K562 (cell line): ENCODE measurements at regions of chr18 and their contacts with region 1.

Region 1: DNA sequence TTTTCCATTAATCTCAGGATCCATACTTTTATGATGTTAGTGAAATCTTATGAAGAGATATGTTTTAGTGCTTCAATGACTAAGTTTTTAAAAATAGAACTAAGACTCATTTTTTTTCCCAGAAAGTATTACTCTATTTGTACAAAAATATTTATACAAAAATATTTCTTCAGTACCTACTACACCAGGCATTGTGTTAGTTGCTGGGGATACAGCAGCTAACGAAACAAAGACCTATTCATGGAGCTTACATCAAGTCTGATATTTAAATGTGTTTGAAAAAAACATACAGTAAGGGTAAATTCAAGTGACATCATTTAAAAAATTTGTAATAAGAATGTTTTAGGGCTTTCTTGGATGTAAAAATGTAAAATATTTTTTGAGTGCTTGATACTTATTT is 11.6 kb downstream of the VAPA start:
- DNase-seq: no peak
- ATAC-seq: no peak
- H3K4me3 ChIP-seq: no peak overlapping the region
- H3K27ac ChIP-seq: peak overlapping the region; percentile 69; the same call in 2 of the 3 replicates
- H3K4me1 ChIP-seq: peaks cover 5 to 77% of the 10 kb centered on the region in 2 experiments
- H3K27me3 ChIP-seq: no peaks in the 10 kb centered on the region
- CTCF ChIP-seq: no peak
- EP300 ChIP-seq: no peak
- POLR2A ChIP-seq: no peak
- RAD21 ChIP-seq: no peak

Region 2: DNA sequence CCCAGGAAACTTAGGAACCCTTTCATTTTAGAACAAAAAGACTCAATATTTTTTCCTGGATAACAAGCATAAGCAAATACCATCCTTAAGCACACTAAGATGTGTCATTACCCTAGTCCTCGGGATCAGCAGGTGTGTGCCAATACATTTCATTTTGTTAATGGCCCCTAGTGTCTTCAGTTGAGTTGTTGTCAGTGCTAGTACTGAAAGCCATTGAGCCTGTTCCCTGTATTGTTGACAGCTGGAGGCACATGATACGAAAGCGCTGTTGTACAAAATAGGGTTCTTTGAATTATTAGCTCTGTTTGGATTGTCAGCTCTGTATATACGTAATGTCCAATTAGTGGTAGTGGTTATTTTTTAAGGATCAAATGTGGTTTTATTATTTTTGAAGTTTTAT is 17.9 kb after region 1 on chr18:
- CTCF ChIA-PET with region 1: no interaction called
- POLR2A ChIA-PET with region 1: interaction called, 11 read pairs
- in situ Hi-C with region 1: no loop called
- intact Hi-C with region 1: no loop called
- DNase-seq: no peak
- ATAC-seq: no peak; the same call in 2 of the 3 replicates
- H3K4me3 ChIP-seq: no peak overlapping the region
- H3K27ac ChIP-seq: peak overlapping the region; percentile 30; the same call in 1 of the 3 replicates
- H3K4me1 ChIP-seq: peaks cover 0 to 3% of the 10 kb centered on the region in 2 experiments; a peak in 2 of 5 replicates
- H3K27me3 ChIP-seq: no peaks in the 10 kb centered on the region
- CTCF ChIP-seq: no peak
- EP300 ChIP-seq: no peak
- POLR2A ChIP-seq: no peak
- RAD21 ChIP-seq: no peak

Region 3: GRCh38 chr18:10113121-10114022 is 188.0 kb after region 1 on chr18:
- CTCF ChIA-PET with region 1: no interaction called
- POLR2A ChIA-PET with region 1: no interaction called
- in situ Hi-C with region 1: no loop called
- intact Hi-C with region 1: no loop called
- DNase-seq: no peak
- ATAC-seq: no peak
- H3K4me3 ChIP-seq: no peak overlapping the region
- H3K27ac ChIP-seq: no peak overlapping the region
- H3K4me1 ChIP-seq: no peaks in the 10 kb centered on the region
- H3K27me3 ChIP-seq: peaks cover 6 to 13% of the 10 kb centered on the region in 2 experiments; a peak in 4 of 5 replicates
- CTCF ChIP-seq: no peak
- EP300 ChIP-seq: no peak
- POLR2A ChIP-seq: no peak
- RAD21 ChIP-seq: no peak